Activated CD4-positive, alpha-beta T cell treated with anti-CD3 and anti-CD28 coated beads, Interleukin-2, amount 10 ng/mL, durations not matched to agents 7 days and 5 days (primary cell): ENCODE measurements at regions of chr1 and their contacts with region 1.

Region 1: DNA sequence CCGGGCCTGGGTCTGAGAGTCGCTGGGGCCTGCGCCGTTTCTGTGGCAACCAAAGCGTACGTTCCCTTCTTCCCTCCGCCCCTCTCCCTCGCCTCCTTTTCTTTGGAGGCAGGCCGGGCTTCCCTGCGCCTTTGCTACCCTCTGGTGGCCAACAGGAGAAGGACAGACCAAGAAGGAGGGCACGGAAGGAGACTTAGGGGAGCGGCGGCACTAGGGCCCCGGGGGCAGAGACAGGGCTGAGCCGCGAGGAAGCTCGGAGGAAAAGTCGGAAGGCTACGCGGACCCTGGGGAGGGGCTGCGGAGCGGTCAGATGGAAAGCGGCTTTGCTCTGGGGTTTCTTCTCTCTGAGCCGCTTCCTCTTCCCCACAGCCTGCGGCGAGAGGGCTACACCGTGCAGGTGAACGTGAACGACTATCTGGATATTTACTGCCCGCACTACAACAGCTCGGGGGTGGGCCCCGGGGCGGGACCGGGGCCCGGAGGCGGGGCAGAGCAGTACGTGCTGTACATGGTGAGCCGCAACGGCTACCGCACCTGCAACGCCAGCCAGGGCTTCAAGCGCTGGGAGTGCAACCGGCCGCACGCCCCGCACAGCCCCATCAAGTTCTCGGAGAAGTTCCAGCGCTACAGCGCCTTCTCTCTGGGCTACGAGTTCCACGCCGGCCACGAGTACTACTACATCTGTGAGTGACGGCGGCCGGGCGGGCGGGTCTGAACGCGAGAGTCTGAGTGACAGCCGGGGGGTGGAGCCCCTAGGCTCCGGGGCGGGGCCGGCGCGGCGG is 6.3 kb downstream of the EFNA3 start:
- DNase-seq: peak; percentile 94
- H3K4me3 Mint-ChIP-seq: peak overlapping the region; percentile 79
- H3K27ac Mint-ChIP-seq: peak overlapping the region; percentile 89
- H3K4me1 Mint-ChIP-seq: peaks cover 40% of the 10 kb centered on the region
- H3K27me3 Mint-ChIP-seq: peaks cover 34% of the 10 kb centered on the region

Region 2: DNA sequence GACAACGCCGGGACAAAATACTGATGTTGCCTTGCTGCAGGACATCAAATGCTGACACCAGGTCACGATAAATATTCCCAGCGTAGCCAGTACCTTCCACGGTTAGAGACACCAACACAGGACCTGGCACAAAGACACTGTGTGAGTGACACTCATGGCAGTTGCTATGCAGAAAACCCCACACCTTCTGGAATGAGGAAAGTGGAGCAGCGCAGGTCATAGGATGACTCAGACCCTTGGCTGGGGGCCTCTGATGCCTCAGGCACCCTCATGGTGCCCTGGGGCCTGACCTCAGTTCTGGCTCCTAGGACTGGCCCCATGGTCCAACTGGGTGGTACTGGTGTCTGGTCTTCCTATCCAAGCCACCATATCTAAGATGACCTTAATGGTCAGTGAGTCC is 58.3 kb before region 1 on chr1:
- CTCF ChIA-PET with region 1: no interaction called
- POLR2A ChIA-PET with region 1: no interaction called
- DNase-seq: no peak
- H3K4me3 Mint-ChIP-seq: no peak overlapping the region
- H3K27ac Mint-ChIP-seq: no peak overlapping the region
- H3K4me1 Mint-ChIP-seq: peaks cover 6% of the 10 kb centered on the region
- H3K27me3 Mint-ChIP-seq: peaks cover 3% of the 10 kb centered on the region

Region 3: GRCh38 chr1:155044812-155045690 is 39.9 kb before region 1 on chr1:
- CTCF ChIA-PET with region 1: interaction called, 20 read pairs
- POLR2A ChIA-PET with region 1: no interaction called
- DNase-seq: peak; percentile 78
- H3K4me3 Mint-ChIP-seq: no peak overlapping the region
- H3K27ac Mint-ChIP-seq: peak overlapping the region; percentile 60
- H3K4me1 Mint-ChIP-seq: peaks cover 16% of the 10 kb centered on the region
- H3K27me3 Mint-ChIP-seq: peaks cover 2% of the 10 kb centered on the region

Region 4: DNA sequence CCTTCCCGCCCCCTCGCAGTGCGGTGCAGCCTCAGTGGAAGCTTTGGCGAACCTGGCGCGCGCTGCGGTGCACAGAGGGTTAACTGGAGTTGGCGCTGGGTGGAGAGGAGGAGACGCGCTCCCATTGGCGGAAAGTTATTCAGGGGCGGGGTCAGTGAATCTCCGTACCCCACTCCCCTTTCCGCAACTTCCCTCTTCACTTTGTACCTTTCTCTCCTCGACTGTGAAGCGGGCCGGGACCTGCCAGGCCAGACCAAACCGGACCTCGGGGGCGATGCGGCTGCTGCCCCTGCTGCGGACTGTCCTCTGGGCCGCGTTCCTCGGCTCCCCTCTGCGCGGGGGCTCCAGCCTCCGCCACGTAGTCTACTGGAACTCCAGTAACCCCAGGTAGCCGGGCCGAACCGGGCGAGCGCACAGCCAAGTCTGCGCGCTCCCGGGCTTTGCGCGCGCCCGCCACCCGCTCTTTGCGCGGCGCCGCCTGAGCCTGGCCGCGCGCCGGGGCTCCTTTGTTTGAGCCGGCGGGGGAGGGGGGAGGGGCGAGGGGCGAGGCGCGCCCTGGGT is 21.3 kb before region 1 on chr1 and contains the start of gene EFNA4:
- CTCF ChIA-PET with region 1: interaction called, 39 read pairs
- POLR2A ChIA-PET with region 1: no interaction called
- DNase-seq: peak; percentile 91
- H3K4me3 Mint-ChIP-seq: peak within 1 kb of the TSS; percentile 91
- H3K27ac Mint-ChIP-seq: peak within 1 kb of the TSS; percentile 68
- H3K4me1 Mint-ChIP-seq: peaks cover 36% of the 10 kb centered on the region
- H3K27me3 Mint-ChIP-seq: no peaks in the 10 kb centered on the region
- total RNA-seq, gene EFNA4: 8.2 to 8.3 TPM

Region 5: GRCh38 chr1:155135415-155136028 is 50.6 kb after region 1 on chr1 and contains the start of gene SLC50A1:
- CTCF ChIA-PET with region 1: interaction called, 12 read pairs
- POLR2A ChIA-PET with region 1: no interaction called
- DNase-seq: peak; percentile 94
- H3K4me3 Mint-ChIP-seq: peak within 1 kb of the TSS; percentile 98
- H3K27ac Mint-ChIP-seq: peak within 1 kb of the TSS; percentile 98
- H3K4me1 Mint-ChIP-seq: peaks cover 48% of the 10 kb centered on the region
- H3K27me3 Mint-ChIP-seq: no peaks in the 10 kb centered on the region
- total RNA-seq, gene SLC50A1: 37.2 to 42.3 TPM